ENCODE measurements at regions of chr7 and their contacts with region 1.

Region 1: DNA sequence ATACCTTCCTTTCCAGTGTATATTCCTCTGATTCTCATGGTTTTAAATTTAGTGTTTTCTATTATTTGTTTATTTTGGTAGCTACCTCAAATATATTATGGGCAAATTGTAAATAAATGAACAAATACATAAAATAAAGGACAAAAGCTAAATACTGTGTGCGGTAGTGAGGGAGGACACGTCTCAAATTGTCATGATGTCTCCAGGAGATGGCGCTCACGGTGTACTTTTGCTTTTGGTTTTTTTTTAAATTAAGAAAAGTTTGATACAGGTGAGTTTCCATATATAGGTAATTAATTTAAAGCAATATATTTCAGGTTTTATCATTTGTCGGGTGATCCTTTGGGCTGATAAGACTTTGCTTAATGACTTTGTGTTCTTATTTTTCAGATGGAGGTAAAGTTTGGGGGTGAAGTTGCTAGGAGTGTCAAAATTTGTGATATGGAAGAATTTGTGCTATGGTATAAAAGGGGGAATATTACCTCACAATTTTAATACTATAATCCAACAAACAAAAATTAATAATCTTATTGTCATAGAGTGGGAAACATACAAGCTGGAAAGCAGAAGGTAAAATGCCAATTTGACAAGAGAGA is 68.4 kb upstream of the TMEM229A start:
- DNase-seq: no peak
- ATAC-seq: no peak
- H3K4me3 ChIP-seq: no peak overlapping the region
- H3K27ac ChIP-seq: no peak overlapping the region
- H3K4me1 ChIP-seq: no peaks in the 10 kb centered on the region
- H3K27me3 ChIP-seq: no peaks in the 10 kb centered on the region
- CTCF ChIP-seq: peak in 6 of 9 donors; percentile 25 to 42 (median 34)

Region 2: GRCh38 chr7:123966936-123967335 is 134.3 kb before region 1 on chr7:
- intact Hi-C with region 1: loop called in 1 of 10 experiments (anchors 10 kb)
- DNase-seq: no peak
- ATAC-seq: no peak
- H3K4me3 ChIP-seq: no peak overlapping the region
- H3K27ac ChIP-seq: no peak overlapping the region
- H3K4me1 ChIP-seq: no peaks in the 10 kb centered on the region
- H3K27me3 ChIP-seq: no peaks in the 10 kb centered on the region
- CTCF ChIP-seq: peak in 2 of 9 donors; percentile 7 to 20